Aorta (tissue), 5 donors: ENCODE measurements at regions of chr1 and their contacts with region 1.

Region 1: DNA sequence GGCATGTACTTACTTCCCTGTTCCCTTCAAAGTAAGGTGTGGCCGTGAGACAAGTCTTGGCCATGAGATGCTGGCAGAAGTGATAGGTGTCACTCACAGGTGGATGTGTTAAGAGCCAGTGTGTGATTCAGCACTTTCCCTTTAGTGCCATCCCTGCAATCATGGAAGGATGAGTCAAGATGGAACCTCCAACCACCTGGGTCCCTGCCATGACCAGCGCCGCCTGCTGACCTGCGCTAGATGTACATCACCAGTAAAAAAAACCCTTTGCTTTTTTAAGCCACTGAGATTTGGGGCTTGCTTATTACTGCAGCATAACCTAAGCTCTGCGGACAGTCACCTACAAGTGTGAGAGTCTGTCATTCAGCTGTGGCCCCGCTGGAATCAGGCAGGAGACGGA is 71.7 kb downstream of the TOMM20 start:
- DNase-seq: no peak
- ATAC-seq: no peak
- H3K4me3 ChIP-seq: no peak overlapping the region
- H3K27ac ChIP-seq: no peak overlapping the region
- H3K4me1 ChIP-seq: no peaks in the 10 kb centered on the region
- H3K27me3 ChIP-seq: no peaks in the 10 kb centered on the region

Region 2: DNA sequence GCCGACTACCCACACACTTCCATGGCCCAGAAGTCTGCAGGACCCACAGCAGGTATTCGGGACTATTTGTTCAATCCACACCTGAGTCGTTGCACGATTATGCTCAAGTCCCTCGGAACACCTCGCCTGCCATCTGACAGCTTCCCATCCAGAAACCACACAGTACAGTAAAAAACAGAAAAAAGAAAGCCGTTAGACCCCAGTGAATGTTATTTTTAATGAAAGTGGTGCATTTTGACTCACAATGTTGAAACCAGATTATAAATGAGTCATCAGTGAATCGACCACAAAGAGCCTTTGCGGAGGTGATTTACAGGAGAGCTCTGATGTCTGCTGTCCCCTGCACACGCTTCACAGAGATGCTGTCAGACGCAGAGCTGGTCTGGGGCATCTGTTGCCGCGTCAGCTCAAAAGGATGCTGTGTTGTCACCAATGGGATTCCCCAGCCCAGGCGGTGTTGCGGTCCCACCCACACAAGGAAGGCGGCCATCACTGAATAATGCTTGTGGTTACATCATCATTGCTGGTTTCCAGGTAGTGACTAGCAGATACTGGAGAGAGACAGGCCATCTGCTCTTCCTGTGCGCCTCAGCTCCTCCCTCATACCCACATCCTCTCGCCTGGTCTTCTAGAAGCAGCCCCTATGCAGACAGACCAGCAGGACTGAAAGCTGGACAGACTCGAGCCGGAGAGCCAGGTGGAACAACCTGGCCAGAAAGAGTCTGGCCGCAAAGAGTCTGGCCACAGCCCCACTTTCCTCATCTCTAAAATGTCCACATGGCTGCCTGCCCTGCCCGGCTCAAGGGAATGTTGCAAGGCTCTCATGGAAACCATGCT is 45.1 kb before region 1 on chr1:
- intact Hi-C with region 1: loop called in 1 of 2 experiments (anchors 5 kb)
- DNase-seq: peak; percentile 79 to 83
- ATAC-seq: peak; percentile 52
- H3K4me3 ChIP-seq: no peak overlapping the region
- H3K27ac ChIP-seq: no peak overlapping the region
- H3K4me1 ChIP-seq: no peaks in the 10 kb centered on the region
- H3K27me3 ChIP-seq: no peaks in the 10 kb centered on the region